MCF 10A (cell line): ENCODE measurements at regions of chr12 and their contacts with region 1.

Region 1: GRCh38 chr12:5872735-5873134 is 72.3 kb downstream of the ANO2 start:
- DNase-seq: peak; percentile 6
- H3K4me3 Mint-ChIP-seq: no peak overlapping the region
- H3K27ac Mint-ChIP-seq: no peak overlapping the region
- H3K4me1 Mint-ChIP-seq: no peaks in the 10 kb centered on the region
- H3K27me3 Mint-ChIP-seq: no peaks in the 10 kb centered on the region
- CTCF ChIP-seq: no peak

Region 2: DNA sequence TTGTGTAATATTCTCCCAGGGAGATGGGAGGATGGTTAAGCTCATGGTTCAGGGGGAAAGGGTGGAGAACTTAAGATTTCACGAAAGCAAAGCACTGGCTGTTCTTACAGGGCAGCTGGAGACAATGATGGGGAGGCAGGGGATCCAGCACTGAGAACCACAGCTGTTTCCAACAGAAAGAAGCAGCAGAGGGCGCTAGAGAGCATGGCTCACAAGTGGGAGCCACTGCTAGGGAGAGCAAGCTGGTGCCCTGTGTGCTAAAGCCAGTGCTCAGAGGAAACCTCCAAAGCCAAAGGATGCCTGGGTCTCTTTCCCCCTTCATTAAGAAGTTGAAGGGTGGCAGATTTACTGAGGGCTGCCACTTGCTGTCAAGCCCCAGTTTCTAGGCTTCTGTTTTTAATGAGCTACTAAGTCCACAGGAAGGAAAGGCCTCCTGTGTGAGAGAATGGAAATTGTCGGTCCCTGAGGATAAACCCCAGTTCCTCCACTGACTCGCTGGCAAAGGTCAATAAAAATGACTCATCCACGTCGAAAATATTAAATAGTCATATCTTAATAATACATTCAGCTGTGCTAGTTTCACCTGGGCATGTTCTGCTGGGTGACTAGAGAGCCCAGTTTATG is 127.4 kb before region 1 on chr12:
- CTCF ChIA-PET with region 1: interaction called, 5 read pairs
- POLR2A ChIA-PET with region 1: no interaction called
- intact Hi-C with region 1: loop called (anchors 2 kb)
- DNase-seq: peak; percentile 52
- H3K4me3 Mint-ChIP-seq: no peak overlapping the region
- H3K27ac Mint-ChIP-seq: no peak overlapping the region
- H3K4me1 Mint-ChIP-seq: no peaks in the 10 kb centered on the region
- H3K27me3 Mint-ChIP-seq: no peaks in the 10 kb centered on the region
- CTCF ChIP-seq: peak; percentile 26